ENCODE measurements at regions of chr2 and their contacts with region 1.

Region 1: GRCh38 chr2:72973566-72974435 is 56.5 kb downstream of the EMX1 start:
- DNase-seq: peak; percentile 46
- H3K4me3 ChIP-seq: no peak overlapping the region
- H3K27ac ChIP-seq: no peak overlapping the region
- H3K4me1 ChIP-seq: no peaks in the 10 kb centered on the region
- H3K27me3 ChIP-seq: no peaks in the 10 kb centered on the region
- CTCF ChIP-seq: peak; percentile 80 to 92
- POLR2A ChIP-seq: no peak

Region 2: GRCh38 chr2:72924353-72925240 is 49.2 kb before region 1 on chr2:
- CTCF ChIA-PET with region 1: interaction called, 26 read pairs
- POLR2A ChIA-PET with region 1: no interaction called
- dilution Hi-C with region 1: no loop called
- intact Hi-C with region 1: no loop called
- DNase-seq: no peak
- H3K4me3 ChIP-seq: no peak overlapping the region
- H3K27ac ChIP-seq: no peak overlapping the region
- H3K4me1 ChIP-seq: peaks cover 3% of the 10 kb centered on the region
- H3K27me3 ChIP-seq: peaks cover 93 to 100% of the 10 kb centered on the region in 2 experiments
- CTCF ChIP-seq: no peak
- POLR2A ChIP-seq: no peak

Region 3: GRCh38 chr2:72963423-72964145 is 10.2 kb before region 1 on chr2:
- CTCF ChIA-PET with region 1: interaction called, 30 read pairs
- POLR2A ChIA-PET with region 1: no interaction called
- dilution Hi-C with region 1: no loop called
- intact Hi-C with region 1: no loop called
- DNase-seq: peak; percentile 14
- H3K4me3 ChIP-seq: no peak overlapping the region
- H3K27ac ChIP-seq: no peak overlapping the region
- H3K4me1 ChIP-seq: no peaks in the 10 kb centered on the region
- H3K27me3 ChIP-seq: no peaks in the 10 kb centered on the region
- CTCF ChIP-seq: no peak
- POLR2A ChIP-seq: no peak

Region 4: GRCh38 chr2:73020657-73021370 is 47.0 kb after region 1 on chr2:
- CTCF ChIA-PET with region 1: no interaction called
- POLR2A ChIA-PET with region 1: no interaction called
- dilution Hi-C with region 1: no loop called
- intact Hi-C with region 1: no loop called
- DNase-seq: peak; percentile 4
- H3K4me3 ChIP-seq: no peak overlapping the region
- H3K27ac ChIP-seq: peak overlapping the region; percentile 15
- H3K4me1 ChIP-seq: peaks cover 13% of the 10 kb centered on the region
- H3K27me3 ChIP-seq: no peaks in the 10 kb centered on the region
- CTCF ChIP-seq: no peak
- POLR2A ChIP-seq: no peak

Measured in endothelial cell of umbilical vein (primary cell).